Activated CD4-positive, alpha-beta memory T cell treated with anti-CD3 and anti-CD28 coated beads for 36 hours (primary cell): ENCODE measurements at regions of chr4 and their contacts with region 1.

Region 1: GRCh38 chr4:7843831-7844593 is 95.6 kb downstream of the AFAP1 start:
- DNase-seq: peak; percentile 79
- H3K4me3 Mint-ChIP-seq: no peak overlapping the region
- H3K27ac Mint-ChIP-seq: peak overlapping the region; percentile 56
- H3K4me1 Mint-ChIP-seq: peaks cover 35% of the 10 kb centered on the region
- H3K27me3 Mint-ChIP-seq: no peaks in the 10 kb centered on the region

Region 2: GRCh38 chr4:7857238-7857701 is 13.3 kb after region 1 on chr4:
- CTCF ChIA-PET with region 1: interaction called, 22 read pairs
- POLR2A ChIA-PET with region 1: interaction called, 4 read pairs
- intact Hi-C with region 1: no loop called
- DNase-seq: no peak
- H3K4me3 Mint-ChIP-seq: peak overlapping the region; percentile 17
- H3K27ac Mint-ChIP-seq: peak overlapping the region; percentile 82
- H3K4me1 Mint-ChIP-seq: peaks cover 75% of the 10 kb centered on the region
- H3K27me3 Mint-ChIP-seq: no peaks in the 10 kb centered on the region

Region 3: DNA sequence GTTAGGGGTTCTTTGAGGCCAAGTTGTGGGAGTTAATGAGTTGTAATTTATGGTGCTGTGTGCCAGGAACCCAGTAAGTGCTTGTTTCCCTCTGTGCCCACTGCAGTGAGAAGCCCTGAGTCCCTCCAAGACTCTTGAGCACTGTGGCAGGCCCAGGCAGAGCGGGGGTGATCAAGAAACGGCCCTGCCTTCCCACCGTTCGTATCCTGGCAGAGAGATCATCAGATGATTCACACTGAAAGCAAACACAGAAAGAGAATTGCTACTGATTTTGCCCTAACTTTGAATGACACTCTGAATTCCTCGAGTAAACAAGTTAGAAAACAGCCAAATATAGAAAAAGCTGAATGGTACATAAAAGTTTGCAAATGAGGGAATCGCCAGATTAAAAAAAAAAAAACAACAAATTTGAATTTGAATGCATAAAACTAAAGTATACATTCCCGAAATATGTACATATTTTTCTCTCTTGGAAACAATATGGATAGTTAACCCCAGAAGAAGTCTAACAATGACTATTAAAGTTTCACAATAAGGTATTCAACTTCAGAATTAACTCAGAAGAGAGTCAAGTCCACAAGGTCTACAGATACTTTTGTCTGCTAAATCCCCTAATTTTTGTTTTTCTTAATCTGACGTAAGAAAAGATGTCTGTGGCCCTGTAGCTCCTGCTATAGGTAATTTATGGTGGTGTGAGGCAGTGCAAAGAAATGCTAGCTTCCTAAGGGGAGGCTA is 23.9 kb after region 1 on chr4:
- CTCF ChIA-PET with region 1: interaction called, 10 read pairs
- POLR2A ChIA-PET with region 1: no interaction called
- intact Hi-C with region 1: no loop called
- DNase-seq: peak; percentile 68
- H3K4me3 Mint-ChIP-seq: no peak overlapping the region
- H3K27ac Mint-ChIP-seq: peak overlapping the region; percentile 83
- H3K4me1 Mint-ChIP-seq: peaks cover 33% of the 10 kb centered on the region
- H3K27me3 Mint-ChIP-seq: peaks cover 1% of the 10 kb centered on the region

Region 4: DNA sequence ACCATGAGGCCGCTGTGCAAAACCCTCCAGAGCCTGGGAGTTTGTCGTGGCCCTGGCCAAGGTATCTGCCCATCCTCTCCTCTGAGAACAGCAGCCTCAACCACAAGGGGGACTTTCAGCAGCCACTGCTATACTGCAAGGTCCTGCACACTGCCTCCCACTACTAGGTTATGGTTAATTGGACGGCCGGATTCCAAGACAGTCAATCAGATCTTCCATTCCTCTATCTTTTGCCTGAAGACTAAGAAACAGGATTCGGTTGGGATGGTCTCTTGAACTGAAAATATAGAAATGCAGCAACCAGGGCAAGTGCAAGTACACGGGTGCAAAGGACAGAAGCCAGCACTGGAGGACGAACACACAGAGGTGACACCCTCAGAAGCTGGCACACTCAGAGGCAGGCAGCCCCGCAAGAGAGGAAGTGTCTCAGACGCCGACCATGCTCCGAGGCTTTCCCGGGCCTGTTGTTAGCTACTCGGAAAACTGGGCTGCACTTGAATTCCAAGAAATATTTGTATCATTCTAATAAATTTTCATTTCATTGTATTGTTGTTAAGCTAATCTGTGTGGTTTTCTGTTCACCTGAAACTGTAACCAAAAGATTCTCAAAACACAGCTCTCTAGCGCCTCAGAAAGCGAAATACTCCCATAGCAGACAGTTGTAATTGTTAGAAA is 32.3 kb after region 1 on chr4:
- CTCF ChIA-PET with region 1: interaction called, 21 read pairs
- POLR2A ChIA-PET with region 1: no interaction called
- intact Hi-C with region 1: no loop called
- DNase-seq: peak; percentile 65
- H3K4me3 Mint-ChIP-seq: peak overlapping the region; percentile 58
- H3K27ac Mint-ChIP-seq: peak overlapping the region; percentile 66
- H3K4me1 Mint-ChIP-seq: peaks cover 62% of the 10 kb centered on the region
- H3K27me3 Mint-ChIP-seq: no peaks in the 10 kb centered on the region